ENCODE measurements at regions of chr6 and their contacts with region 1.

Region 1: DNA sequence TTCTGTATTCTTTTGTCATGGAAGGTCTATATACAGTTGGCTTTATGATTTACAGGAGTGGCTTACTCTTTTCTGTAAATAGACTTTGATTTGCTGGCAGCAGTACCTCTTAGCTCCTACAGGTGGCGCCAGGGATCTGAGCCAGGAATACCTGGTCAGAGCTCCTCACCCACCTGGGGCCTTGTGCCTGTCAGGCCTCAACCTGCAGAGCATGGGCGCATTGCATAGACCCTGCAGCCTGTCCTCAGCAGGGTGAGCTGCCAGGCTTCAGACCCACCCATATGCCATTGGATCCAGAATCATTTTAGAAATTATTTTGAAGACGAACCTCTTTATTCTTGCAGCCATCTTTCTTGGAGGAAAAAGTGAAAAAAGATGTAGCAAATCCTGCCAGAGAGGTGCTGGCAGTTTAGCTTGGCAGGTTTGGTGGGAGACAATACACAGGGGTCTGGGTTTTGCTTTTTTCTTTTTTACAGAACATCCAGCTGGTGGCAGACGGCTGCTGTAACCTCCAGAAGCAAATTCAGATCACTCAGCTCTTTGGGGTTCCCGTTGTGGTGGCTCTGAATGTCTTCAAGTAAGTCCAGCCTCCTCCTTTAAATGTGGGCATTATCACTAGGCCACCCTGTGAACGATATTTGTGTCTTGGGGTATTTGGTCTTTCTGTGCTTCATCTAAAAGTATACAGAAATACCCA is 149.1 kb downstream of the MTHFD1L start:
- DNase-seq: peak; percentile 73
- H3K4me3 ChIP-seq: no peak overlapping the region; a peak in 1 of 4 replicates
- H3K27ac ChIP-seq: peak overlapping the region in 1 of 2 experiments; percentile 24; a peak in 1 of 4 replicates
- H3K4me1 ChIP-seq: peaks cover 0 to 2% of the 10 kb centered on the region in 2 experiments; a peak in 1 of 4 replicates
- H3K27me3 ChIP-seq: no peaks in the 10 kb centered on the region
- CTCF ChIP-seq: peak; percentile 92
- EP300 ChIP-seq: no peak
- RAD21 ChIP-seq: peak; percentile 97

Region 2: DNA sequence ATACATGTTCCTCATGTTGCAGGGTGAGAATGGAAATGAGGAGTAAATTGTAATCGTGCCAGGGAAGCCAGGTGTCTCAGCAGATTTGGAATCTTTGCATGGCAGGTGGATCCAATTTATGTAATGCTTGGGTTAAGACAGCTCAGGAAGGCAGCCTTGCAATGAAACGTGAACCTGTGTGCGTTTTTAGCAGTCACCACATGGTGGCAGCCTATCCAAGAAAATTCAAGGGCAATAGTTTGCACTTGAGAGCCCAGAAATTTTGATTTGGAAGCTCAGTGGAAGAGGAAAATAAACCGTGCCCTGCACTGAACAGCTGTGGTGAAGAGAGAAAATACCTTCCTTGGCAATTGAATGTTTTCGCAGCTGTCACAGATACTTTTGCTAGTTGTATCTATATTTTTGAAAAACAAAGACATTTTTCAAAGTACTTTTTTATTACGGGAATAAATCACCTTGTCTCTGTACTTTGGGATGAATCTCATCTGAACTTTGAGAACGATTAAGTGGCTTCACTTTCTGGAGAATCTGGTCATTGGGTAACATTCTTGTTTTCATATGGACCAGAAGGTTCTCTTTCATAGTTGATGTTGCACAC is 122.6 kb before region 1 on chr6:
- CTCF ChIA-PET with region 1: interaction called, 26 read pairs
- POLR2A ChIA-PET with region 1: no interaction called
- DNase-seq: peak; percentile 53
- H3K4me3 ChIP-seq: no peak overlapping the region; a peak in 1 of 4 replicates
- H3K27ac ChIP-seq: no peak overlapping the region
- H3K4me1 ChIP-seq: peaks cover 14% of the 10 kb centered on the region in 2 experiments; a peak in 2 of 4 replicates
- H3K27me3 ChIP-seq: no peaks in the 10 kb centered on the region
- CTCF ChIP-seq: peak; percentile 77
- EP300 ChIP-seq: no peak
- RAD21 ChIP-seq: peak; percentile 92

Region 3: DNA sequence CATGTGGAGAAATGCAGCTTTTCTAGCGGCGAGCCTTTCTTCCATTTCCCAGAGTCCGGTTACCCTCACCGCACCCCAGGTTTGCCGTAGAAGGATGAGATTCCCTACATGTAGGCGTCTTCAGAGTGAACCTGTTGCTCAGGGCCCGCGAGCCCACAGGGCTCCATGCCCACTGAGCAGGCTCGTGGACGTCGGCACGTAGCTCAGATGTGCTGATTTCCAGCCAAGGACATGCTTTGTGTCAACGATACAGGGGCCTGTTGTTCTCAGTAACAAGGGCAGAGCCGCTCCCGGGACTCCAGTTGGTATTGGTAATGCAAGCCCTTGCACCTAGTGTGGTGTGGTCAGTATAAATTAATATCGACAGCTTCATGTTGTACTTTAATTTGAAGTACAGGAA is 10.5 kb after region 1 on chr6:
- CTCF ChIA-PET with region 1: interaction called, 16 read pairs
- POLR2A ChIA-PET with region 1: no interaction called
- DNase-seq: no peak
- H3K4me3 ChIP-seq: no peak overlapping the region
- H3K27ac ChIP-seq: no peak overlapping the region
- H3K4me1 ChIP-seq: no peaks in the 10 kb centered on the region
- H3K27me3 ChIP-seq: no peaks in the 10 kb centered on the region
- CTCF ChIP-seq: no peak
- EP300 ChIP-seq: no peak
- RAD21 ChIP-seq: no peak

Region 4: GRCh38 chr6:151060096-151060765 is 45.7 kb after region 1 on chr6:
- CTCF ChIA-PET with region 1: interaction called, 12 read pairs
- POLR2A ChIA-PET with region 1: no interaction called
- DNase-seq: no peak
- H3K4me3 ChIP-seq: no peak overlapping the region
- H3K27ac ChIP-seq: peak overlapping the region; percentile 72 to 98
- H3K4me1 ChIP-seq: peaks cover 23 to 45% of the 10 kb centered on the region in 2 experiments
- H3K27me3 ChIP-seq: no peaks in the 10 kb centered on the region
- CTCF ChIP-seq: no peak
- EP300 ChIP-seq: peak; percentile 50 to 93
- RAD21 ChIP-seq: no peak

Region 5: GRCh38 chr6:151290877-151291721 is 276.5 kb after region 1 on chr6:
- CTCF ChIA-PET with region 1: interaction called, 12 read pairs
- POLR2A ChIA-PET with region 1: no interaction called
- DNase-seq: peak; percentile 39
- H3K4me3 ChIP-seq: no peak overlapping the region
- H3K27ac ChIP-seq: peak overlapping the region; percentile 16 to 51; a peak in 3 of 4 replicates
- H3K4me1 ChIP-seq: peaks cover 8 to 23% of the 10 kb centered on the region in 2 experiments; a peak in 3 of 4 replicates
- H3K27me3 ChIP-seq: no peaks in the 10 kb centered on the region
- CTCF ChIP-seq: no peak
- EP300 ChIP-seq: no peak
- RAD21 ChIP-seq: no peak

Region 6: DNA sequence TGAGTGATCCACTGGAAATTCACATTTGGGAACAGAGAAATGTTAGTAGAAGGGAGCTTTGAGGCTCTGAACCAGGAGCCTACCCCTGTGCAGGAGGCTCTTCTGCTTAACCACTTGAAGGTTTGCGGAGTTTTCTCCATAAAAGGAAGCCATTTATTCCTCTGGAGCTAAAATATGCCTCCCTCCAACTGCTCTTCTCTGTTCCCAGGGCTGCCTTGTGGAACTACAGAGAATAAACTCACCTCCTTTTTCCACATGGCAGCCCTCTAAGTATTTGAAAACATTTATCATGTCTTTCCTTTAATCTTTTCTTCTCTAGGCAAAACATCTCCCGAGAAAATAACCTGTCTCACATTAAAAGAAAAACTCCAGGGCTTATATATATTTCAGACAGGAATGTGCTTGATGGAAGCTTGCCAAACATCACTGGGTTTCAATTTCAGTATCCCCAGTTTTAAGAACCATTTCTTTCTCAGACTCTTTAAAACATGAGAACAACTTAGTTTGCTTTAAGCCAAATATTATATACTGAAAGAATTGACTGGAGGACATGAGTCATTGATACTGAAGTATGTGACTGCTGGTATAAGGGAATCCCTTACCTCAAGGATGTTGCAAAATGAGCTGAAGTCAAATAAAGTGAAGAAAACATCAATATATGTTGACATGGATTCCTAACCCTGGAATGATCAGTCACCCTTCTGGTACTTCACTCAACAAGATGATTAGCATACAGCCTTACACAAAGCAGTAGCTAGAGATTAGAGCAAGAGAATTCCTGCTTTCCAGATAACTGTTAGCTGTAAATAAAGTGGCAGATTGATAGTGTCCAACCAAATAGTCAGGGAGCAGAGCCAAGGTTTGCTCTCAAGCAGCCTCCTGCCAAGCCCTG is 302.8 kb after region 1 on chr6:
- CTCF ChIA-PET with region 1: interaction called, 371 read pairs
- POLR2A ChIA-PET with region 1: no interaction called
- DNase-seq: no peak
- H3K4me3 ChIP-seq: no peak overlapping the region; a peak in 1 of 4 replicates
- H3K27ac ChIP-seq: peak overlapping the region; percentile 68 to 83
- H3K4me1 ChIP-seq: peaks cover 0 to 3% of the 10 kb centered on the region in 2 experiments; a peak in 2 of 4 replicates
- H3K27me3 ChIP-seq: no peaks in the 10 kb centered on the region
- CTCF ChIP-seq: no peak
- EP300 ChIP-seq: no peak
- RAD21 ChIP-seq: no peak

Region 7: GRCh38 chr6:151330134-151330696 is 315.7 kb after region 1 on chr6:
- CTCF ChIA-PET with region 1: interaction called, 371 read pairs
- POLR2A ChIA-PET with region 1: no interaction called
- DNase-seq: peak; percentile 75
- H3K4me3 ChIP-seq: no peak overlapping the region
- H3K27ac ChIP-seq: peak overlapping the region; percentile 11 to 40; a peak in 2 of 4 replicates
- H3K4me1 ChIP-seq: peaks cover 0 to 7% of the 10 kb centered on the region in 2 experiments; a peak in 2 of 4 replicates
- H3K27me3 ChIP-seq: no peaks in the 10 kb centered on the region
- CTCF ChIP-seq: no peak
- EP300 ChIP-seq: no peak
- RAD21 ChIP-seq: no peak

Region 8: DNA sequence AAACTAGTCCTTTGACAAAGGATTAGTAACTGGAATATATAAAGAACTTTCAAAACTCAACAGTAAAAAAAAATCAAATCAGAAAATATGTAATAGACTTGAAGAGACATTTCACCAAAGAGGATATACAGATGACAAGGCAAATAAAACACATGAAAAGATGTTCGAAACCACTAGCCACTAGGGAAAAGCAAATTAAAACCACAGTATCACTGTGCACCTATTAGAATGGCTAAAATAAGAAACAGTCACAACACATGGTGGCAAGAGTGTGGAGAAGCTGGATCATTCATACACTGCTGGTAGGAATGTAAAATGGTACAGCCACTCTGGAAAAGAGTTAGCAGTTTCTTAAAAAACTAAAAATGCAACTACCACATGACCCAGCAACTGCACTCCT is 361.9 kb after region 1 on chr6:
- CTCF ChIA-PET with region 1: no interaction called
- POLR2A ChIA-PET with region 1: no interaction called
- DNase-seq: no peak
- H3K4me3 ChIP-seq: no peak overlapping the region
- H3K27ac ChIP-seq: no peak overlapping the region
- H3K4me1 ChIP-seq: peaks cover 0 to 14% of the 10 kb centered on the region in 2 experiments; a peak in 2 of 4 replicates
- H3K27me3 ChIP-seq: no peaks in the 10 kb centered on the region
- CTCF ChIP-seq: no peak
- EP300 ChIP-seq: no peak
- RAD21 ChIP-seq: no peak

Measured in SK-N-SH (cell line).